Stomach (tissue), 19 donors: ENCODE measurements at regions of chr3 and their contacts with region 1.

Region 1: GRCh38 chr3:141231101-141231935 is at the start of gene PXYLP1:
- DNase-seq: peak; percentile 96 to 97
- H3K4me3 ChIP-seq: peak within 1 kb of the TSS; percentile 78 to 91 (median 82)
- H3K27ac ChIP-seq: peak within 1 kb of the TSS; percentile 81 to 90 (median 85)
- H3K4me1 ChIP-seq: peaks cover 12 to 45% (median 31%) of the 10 kb centered on the region in 4 donors
- H3K27me3 ChIP-seq: no peaks in the 10 kb centered on the region
- CTCF ChIP-seq: peak in 3 of 7 experiments; percentile 32 to 92 (median 65)
- EP300 ChIP-seq: no peak
- POLR2A ChIP-seq: no peak
- total RNA-seq, gene PXYLP1: 0.58 to 24.8 (median 5.3) TPM

Region 2: DNA sequence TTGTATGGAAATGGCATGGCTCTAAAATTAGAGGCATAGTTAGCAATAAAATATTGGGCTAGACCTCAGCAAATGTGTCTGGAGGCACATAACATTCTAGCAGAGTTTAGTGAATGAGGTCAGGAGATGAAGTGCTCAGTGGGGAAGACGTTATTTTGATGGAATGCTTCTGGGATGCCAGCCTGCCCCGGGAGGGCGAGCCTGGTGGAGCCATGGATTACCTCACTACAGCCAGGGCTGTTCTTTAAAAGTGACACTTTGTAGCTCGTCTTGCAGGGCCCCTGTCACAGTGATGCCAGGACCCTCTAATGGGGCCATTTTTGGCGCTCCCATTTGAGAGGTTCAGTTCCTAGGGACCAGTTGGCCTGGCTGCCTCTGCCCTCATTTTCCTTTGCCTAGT is 48.8 kb after region 1 on chr3:
- intact Hi-C with region 1: loop called (anchors 10 kb)
- DNase-seq: peak in 1 of 2 donors; percentile 41
- H3K4me3 ChIP-seq: no peak overlapping the region
- H3K27ac ChIP-seq: peak overlapping the region in 2 of 5 donors; percentile 26 to 27
- H3K4me1 ChIP-seq: peaks cover 0 to 17% (median 7%) of the 10 kb centered on the region in 4 donors
- H3K27me3 ChIP-seq: no peaks in the 10 kb centered on the region
- CTCF ChIP-seq: no peak
- EP300 ChIP-seq: no peak
- POLR2A ChIP-seq: no peak

Region 3: GRCh38 chr3:141452036-141452435 is 220.7 kb after region 1 on chr3:
- intact Hi-C with region 1: no loop called
- DNase-seq: peak in 1 of 2 donors; percentile 86
- H3K4me3 ChIP-seq: no peak overlapping the region
- H3K27ac ChIP-seq: peak overlapping the region; percentile 24 to 69 (median 38)
- H3K4me1 ChIP-seq: peaks cover 16 to 82% (median 56%) of the 10 kb centered on the region in 4 donors
- H3K27me3 ChIP-seq: no peaks in the 10 kb centered on the region
- CTCF ChIP-seq: peak in 5 of 7 experiments; percentile 9 to 66 (median 41)
- EP300 ChIP-seq: no peak
- POLR2A ChIP-seq: no peak